ENCODE measurements at regions of chr1 and their contacts with region 1.

Region 1: DNA sequence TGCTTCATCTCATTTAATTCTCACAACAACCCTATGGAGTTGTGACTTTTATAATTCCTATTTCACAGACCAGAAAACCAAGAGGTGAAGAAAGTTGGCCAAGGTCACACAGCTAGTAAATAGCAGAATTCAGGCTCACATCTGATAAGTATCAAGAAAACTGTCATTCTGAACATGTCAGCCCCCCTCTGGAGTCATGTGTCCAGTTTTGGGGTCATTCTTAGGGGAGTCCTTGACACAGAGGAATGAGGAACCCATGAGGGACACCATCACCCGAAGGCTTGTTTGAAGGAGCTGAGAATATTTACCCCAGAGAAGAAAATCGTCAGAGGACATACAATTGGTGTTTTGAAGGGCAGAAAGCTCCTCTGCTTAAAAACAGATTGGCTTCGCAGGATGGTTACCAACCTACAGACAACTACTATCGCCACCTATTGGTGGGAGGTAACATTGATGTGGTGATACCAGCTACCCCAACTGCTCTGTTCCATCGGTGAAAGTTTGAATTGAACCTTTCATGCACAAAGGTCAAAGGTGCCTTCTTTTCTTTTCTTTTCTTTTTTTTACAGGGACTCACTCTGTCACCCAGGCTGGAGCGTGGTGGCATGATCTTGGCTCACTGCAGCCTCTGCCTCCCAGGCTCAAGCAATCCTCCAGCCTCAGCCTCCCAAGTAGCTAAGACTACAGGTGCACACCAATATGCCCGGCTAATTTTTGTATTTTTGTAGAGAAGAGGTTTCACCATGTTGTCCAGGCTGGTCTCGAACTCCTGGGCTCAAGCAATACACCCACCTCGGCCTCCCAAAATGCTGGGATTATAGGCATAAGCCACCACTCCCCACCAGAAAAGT is 31.3 kb downstream of the NCMAP start:
- DNase-seq: peak; percentile 81
- ATAC-seq: peak; percentile 94
- H3K4me3 ChIP-seq: no peak overlapping the region
- H3K4me3 Mint-ChIP-seq: no peak overlapping the region
- H3K27ac ChIP-seq: no peak overlapping the region
- H3K27ac Mint-ChIP-seq: no peak overlapping the region
- H3K4me1 ChIP-seq: peaks cover 4% of the 10 kb centered on the region in 2 donors
- H3K4me1 Mint-ChIP-seq: peaks cover 8% of the 10 kb centered on the region
- H3K27me3 ChIP-seq: peaks cover 0 to 3% (median 0%) of the 10 kb centered on the region in 4 experiments
- H3K27me3 Mint-ChIP-seq: no peaks in the 10 kb centered on the region
- CTCF ChIP-seq: peak; percentile 81

Region 2: GRCh38 chr1:24150234-24151174 is 436.7 kb before region 1 on chr1:
- CTCF ChIA-PET with region 1: interaction called, 14 read pairs
- POLR2A ChIA-PET with region 1: no interaction called
- intact Hi-C with region 1: no loop called
- DNase-seq: peak; percentile 90
- ATAC-seq: peak; percentile 98
- H3K4me3 ChIP-seq: peak overlapping the region in 4 of 5 experiments; percentile 32 to 50 (median 48)
- H3K4me3 Mint-ChIP-seq: peak overlapping the region; percentile 82
- H3K27ac ChIP-seq: no peak overlapping the region
- H3K27ac Mint-ChIP-seq: peak overlapping the region; percentile 21
- H3K4me1 ChIP-seq: peaks cover 13 to 19% of the 10 kb centered on the region in 2 donors
- H3K4me1 Mint-ChIP-seq: peaks cover 27% of the 10 kb centered on the region
- H3K27me3 ChIP-seq: peaks cover 0 to 7% (median 2%) of the 10 kb centered on the region in 4 experiments
- H3K27me3 Mint-ChIP-seq: peaks cover 3% of the 10 kb centered on the region
- CTCF ChIP-seq: peak; percentile 88

Region 3: GRCh38 chr1:24415334-24415909 is 171.8 kb before region 1 on chr1 and contains the start of gene NIPAL3:
- CTCF ChIA-PET with region 1: interaction called, 133 read pairs
- POLR2A ChIA-PET with region 1: interaction called, 7 read pairs
- intact Hi-C with region 1: no loop called
- DNase-seq: peak; percentile 98
- ATAC-seq: peak; percentile 91
- H3K4me3 ChIP-seq: peak within 1 kb of the TSS; percentile 79 to 94 (median 86)
- H3K4me3 Mint-ChIP-seq: peak within 1 kb of the TSS; percentile 92
- H3K27ac ChIP-seq: peak within 1 kb of the TSS; percentile 37 to 55
- H3K27ac Mint-ChIP-seq: peak within 1 kb of the TSS; percentile 84
- H3K4me1 ChIP-seq: peaks cover 26 to 36% of the 10 kb centered on the region in 2 donors
- H3K4me1 Mint-ChIP-seq: peaks cover 49% of the 10 kb centered on the region
- H3K27me3 ChIP-seq: no peaks in the 10 kb centered on the region
- H3K27me3 Mint-ChIP-seq: no peaks in the 10 kb centered on the region
- CTCF ChIP-seq: peak; percentile 89
- total RNA-seq, gene NIPAL3: 31.6 and 38.8 TPM in 2 replicates

Region 4: DNA sequence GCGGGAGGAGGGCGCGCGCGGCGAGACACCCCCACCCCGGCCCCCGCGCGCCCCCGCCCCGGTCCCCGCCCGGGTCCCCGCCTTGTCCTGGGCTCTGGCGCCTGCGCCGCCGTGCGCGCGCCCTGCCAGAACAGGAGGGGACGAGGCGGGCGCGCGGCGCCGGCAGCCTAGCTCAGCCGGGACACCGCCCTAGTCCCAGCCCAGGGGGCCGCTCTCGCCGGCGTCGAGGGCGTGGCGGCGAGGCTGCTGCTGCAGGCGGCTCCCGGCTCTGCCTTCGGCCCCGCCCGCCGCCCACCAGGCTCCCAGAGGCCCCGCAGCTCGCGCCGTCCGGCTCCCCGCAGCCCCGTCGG is 84.5 kb before region 1 on chr1 and contains the start of gene RCAN3:
- CTCF ChIA-PET with region 1: interaction called, 32 read pairs
- POLR2A ChIA-PET with region 1: no interaction called
- intact Hi-C with region 1: loop called (anchors 2 kb)
- DNase-seq: peak; percentile 93
- ATAC-seq: peak; percentile 86
- H3K4me3 ChIP-seq: peak within 1 kb of the TSS; percentile 66 to 92 (median 83)
- H3K4me3 Mint-ChIP-seq: peak within 1 kb of the TSS; percentile 97
- H3K27ac ChIP-seq: peak within 1 kb of the TSS; percentile 93 to 94
- H3K27ac Mint-ChIP-seq: peak within 1 kb of the TSS; percentile 96
- H3K4me1 ChIP-seq: peaks cover 43 to 46% of the 10 kb centered on the region in 2 donors
- H3K4me1 Mint-ChIP-seq: peaks cover 55% of the 10 kb centered on the region
- H3K27me3 ChIP-seq: no peaks in the 10 kb centered on the region
- H3K27me3 Mint-ChIP-seq: no peaks in the 10 kb centered on the region
- CTCF ChIP-seq: no peak
- total RNA-seq, gene RCAN3: 35.1 and 37.3 TPM in 2 replicates

Region 5: DNA sequence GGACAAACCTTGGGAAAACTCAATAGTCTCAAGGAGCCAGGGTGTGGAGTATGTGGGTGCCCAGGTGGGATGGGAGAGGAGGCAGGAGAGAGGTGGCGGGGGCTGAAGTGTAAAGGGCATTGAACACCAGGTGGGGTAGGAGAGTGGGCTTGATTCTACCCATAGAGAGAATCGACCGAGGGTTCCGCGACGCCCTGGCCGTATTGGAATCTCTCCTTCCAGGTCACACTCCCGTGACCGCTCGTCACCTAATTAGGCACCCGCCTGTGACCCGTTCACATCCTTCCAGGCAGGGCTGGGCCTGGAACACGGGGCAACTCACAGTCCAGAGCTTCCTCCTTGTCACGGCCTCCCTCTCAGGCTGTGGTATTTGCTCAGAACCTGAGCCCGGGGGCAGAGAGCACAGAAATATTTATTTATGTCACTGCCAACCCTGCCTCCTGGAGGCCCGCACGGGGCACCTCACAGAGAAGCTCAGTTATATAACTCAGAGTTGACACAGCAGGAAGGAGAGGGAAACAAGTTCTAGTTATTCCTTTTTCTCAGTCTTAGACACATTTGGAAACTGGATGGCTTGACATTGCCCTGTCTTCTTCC is 19.3 kb before region 1 on chr1:
- CTCF ChIA-PET with region 1: interaction called, 19 read pairs
- POLR2A ChIA-PET with region 1: no interaction called
- intact Hi-C with region 1: no loop called
- DNase-seq: peak; percentile 24
- ATAC-seq: peak; percentile 21
- H3K4me3 ChIP-seq: no peak overlapping the region
- H3K4me3 Mint-ChIP-seq: no peak overlapping the region
- H3K27ac ChIP-seq: no peak overlapping the region
- H3K27ac Mint-ChIP-seq: no peak overlapping the region
- H3K4me1 ChIP-seq: peaks cover 7 to 18% of the 10 kb centered on the region in 2 donors
- H3K4me1 Mint-ChIP-seq: peaks cover 26% of the 10 kb centered on the region
- H3K27me3 ChIP-seq: peaks cover 0 to 3% (median 0%) of the 10 kb centered on the region in 4 experiments
- H3K27me3 Mint-ChIP-seq: no peaks in the 10 kb centered on the region
- CTCF ChIP-seq: no peak

Region 6: GRCh38 chr1:24714859-24715520 is 127.8 kb after region 1 on chr1:
- CTCF ChIA-PET with region 1: no interaction called
- POLR2A ChIA-PET with region 1: no interaction called
- intact Hi-C with region 1: no loop called
- DNase-seq: no peak
- ATAC-seq: no peak
- H3K4me3 ChIP-seq: no peak overlapping the region
- H3K4me3 Mint-ChIP-seq: no peak overlapping the region
- H3K27ac ChIP-seq: no peak overlapping the region
- H3K27ac Mint-ChIP-seq: no peak overlapping the region
- H3K4me1 ChIP-seq: no peaks in the 10 kb centered on the region
- H3K4me1 Mint-ChIP-seq: no peaks in the 10 kb centered on the region
- H3K27me3 ChIP-seq: no peaks in the 10 kb centered on the region
- H3K27me3 Mint-ChIP-seq: no peaks in the 10 kb centered on the region
- CTCF ChIP-seq: no peak